ENCODE measurements at regions of chr17 and their contacts with region 1.

Region 1: GRCh38 chr17:48908047-48908843 is at the start of gene UBE2Z:
- DNase-seq: peak; percentile 66
- H3K4me3 ChIP-seq: peak within 1 kb of the TSS; percentile 94
- H3K27me3 ChIP-seq: no peaks in the 10 kb centered on the region
- CTCF ChIP-seq: no peak
- polyA plus RNA-seq, gene UBE2Z: 166 and 190 TPM in 2 replicates

Region 2: DNA sequence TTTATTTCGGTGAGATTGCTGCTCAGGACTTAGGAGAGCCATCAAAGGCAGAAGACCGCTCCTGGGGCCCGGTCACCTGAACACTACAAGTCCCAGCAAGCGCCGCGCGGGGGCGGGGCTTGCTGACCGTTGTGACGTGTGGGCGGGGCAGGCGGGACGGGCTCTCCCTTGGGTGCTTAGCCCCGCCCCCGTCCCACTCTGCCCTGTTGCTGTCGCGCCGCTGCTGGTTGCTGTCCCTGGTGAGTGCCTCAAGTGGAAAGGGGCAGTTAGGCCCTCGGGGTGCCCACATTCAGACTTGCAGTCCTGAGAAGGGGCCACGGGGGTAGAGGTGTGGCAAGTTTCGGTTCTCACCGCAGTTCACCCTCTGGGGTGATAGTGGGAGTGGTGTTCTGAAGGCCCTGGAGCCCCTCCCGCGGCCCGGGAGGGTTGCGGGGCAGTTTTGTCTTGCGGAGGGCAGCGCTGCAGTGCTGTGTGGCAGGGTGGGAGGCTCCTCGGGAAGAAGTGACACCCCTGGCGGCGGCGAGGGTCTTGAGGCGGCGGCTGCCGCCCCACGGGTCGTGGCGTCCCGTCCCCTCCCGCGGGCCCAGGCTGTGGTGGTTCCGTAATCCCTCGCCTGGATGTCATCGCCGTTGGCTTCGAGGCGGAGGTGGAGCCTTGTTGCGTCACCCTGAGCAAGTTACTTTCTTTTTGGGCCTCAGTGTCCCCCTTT is 77.3 kb before region 1 on chr17 and contains the start of gene CALCOCO2:
- CTCF ChIA-PET with region 1: no interaction called
- POLR2A ChIA-PET with region 1: no interaction called
- DNase-seq: peak; percentile 51
- H3K4me3 ChIP-seq: peak within 1 kb of the TSS; percentile 69
- H3K27me3 ChIP-seq: no peaks in the 10 kb centered on the region
- CTCF ChIP-seq: no peak
- polyA plus RNA-seq, gene CALCOCO2: 108 and 137 TPM in 2 replicates

Region 3: GRCh38 chr17:48970224-48970623 is 62.0 kb after region 1 on chr17:
- CTCF ChIA-PET with region 1: no interaction called
- POLR2A ChIA-PET with region 1: no interaction called
- DNase-seq: no peak
- H3K4me3 ChIP-seq: no peak overlapping the region
- H3K27me3 ChIP-seq: no peaks in the 10 kb centered on the region
- CTCF ChIP-seq: no peak

Region 4: GRCh38 chr17:49016788-49017463 is 108.7 kb after region 1 on chr17:
- CTCF ChIA-PET with region 1: no interaction called
- POLR2A ChIA-PET with region 1: interaction called, 13 read pairs
- DNase-seq: no peak
- H3K4me3 ChIP-seq: no peak overlapping the region
- H3K27me3 ChIP-seq: peaks cover 5% of the 10 kb centered on the region
- CTCF ChIP-seq: no peak

Region 5: GRCh38 chr17:49045376-49045775 is 137.1 kb after region 1 on chr17:
- CTCF ChIA-PET with region 1: no interaction called
- POLR2A ChIA-PET with region 1: no interaction called
- DNase-seq: no peak
- H3K4me3 ChIP-seq: no peak overlapping the region
- H3K27me3 ChIP-seq: no peaks in the 10 kb centered on the region
- CTCF ChIP-seq: no peak